ENCODE measurements at regions of chr9 and their contacts with region 1.

Region 1: GRCh38 chr9:127586537-127586936 is 25.5 kb upstream of the STXBP1 start:
- DNase-seq: peak; percentile 94
- H3K4me3 ChIP-seq: no peak overlapping the region
- H3K27ac ChIP-seq: peak overlapping the region in 3 of 4 donors; percentile 32 to 77 (median 76)
- H3K4me1 ChIP-seq: peaks cover 0 to 23% (median 19%) of the 10 kb centered on the region in 4 donors
- H3K27me3 ChIP-seq: no peaks in the 10 kb centered on the region
- CTCF ChIP-seq: peak; percentile 79 to 93 (median 88)
- EP300 ChIP-seq: no peak
- POLR2A ChIP-seq: no peak

Region 2: GRCh38 chr9:127503947-127504782 is 82.4 kb before region 1 on chr9:
- intact Hi-C with region 1: loop called (anchors 1 kb)
- DNase-seq: peak; percentile 94
- H3K4me3 ChIP-seq: no peak overlapping the region
- H3K27ac ChIP-seq: peak overlapping the region in 3 of 4 donors; percentile 74 to 75 (median 75)
- H3K4me1 ChIP-seq: peaks cover 0 to 23% (median 14%) of the 10 kb centered on the region in 4 donors
- H3K27me3 ChIP-seq: no peaks in the 10 kb centered on the region
- CTCF ChIP-seq: peak; percentile 86 to 96 (median 88)
- EP300 ChIP-seq: no peak
- POLR2A ChIP-seq: no peak

Region 3: GRCh38 chr9:127545196-127546124 is 41.1 kb before region 1 on chr9:
- intact Hi-C with region 1: no loop called
- DNase-seq: peak; percentile 88
- H3K4me3 ChIP-seq: no peak overlapping the region
- H3K27ac ChIP-seq: peak overlapping the region; percentile 69 to 92 (median 85)
- H3K4me1 ChIP-seq: peaks cover 0 to 86% (median 78%) of the 10 kb centered on the region in 4 donors
- H3K27me3 ChIP-seq: no peaks in the 10 kb centered on the region
- CTCF ChIP-seq: no peak
- EP300 ChIP-seq: no peak
- POLR2A ChIP-seq: no peak

Region 4: GRCh38 chr9:127715394-127716337 is 129.1 kb after region 1 on chr9 and contains the starts of genes PTRH1 and TTC16:
- intact Hi-C with region 1: loop called (anchors 5 kb)
- DNase-seq: peak; percentile 99
- H3K4me3 ChIP-seq: peak within 1 kb of the TSS; percentile 62 to 77 (median 72)
- H3K27ac ChIP-seq: peak within 1 kb of the TSS; percentile 81 to 90 (median 84)
- H3K4me1 ChIP-seq: peaks cover 0 to 23% (median 20%) of the 10 kb centered on the region in 4 donors
- H3K27me3 ChIP-seq: no peaks in the 10 kb centered on the region
- CTCF ChIP-seq: no peak
- EP300 ChIP-seq: no peak
- POLR2A ChIP-seq: peak; percentile 16 to 30
- total RNA-seq, gene PTRH1: 8.9 to 25.8 (median 19.4) TPM
- total RNA-seq, gene TTC16: not detected

Region 5: GRCh38 chr9:127770905-127771569 is 184.5 kb after region 1 on chr9:
- intact Hi-C with region 1: no loop called
- DNase-seq: peak; percentile 99
- H3K4me3 ChIP-seq: peak overlapping the region; percentile 27 to 57 (median 53)
- H3K27ac ChIP-seq: peak overlapping the region; percentile 56 to 69 (median 63)
- H3K4me1 ChIP-seq: peaks cover 0 to 12% (median 9%) of the 10 kb centered on the region in 4 donors
- H3K27me3 ChIP-seq: no peaks in the 10 kb centered on the region
- CTCF ChIP-seq: no peak
- EP300 ChIP-seq: no peak
- POLR2A ChIP-seq: no peak

Region 6: GRCh38 chr9:127785023-127785932 is 198.7 kb after region 1 on chr9:
- intact Hi-C with region 1: loop called (anchors 5 kb)
- DNase-seq: peak; percentile 95
- H3K4me3 ChIP-seq: peak overlapping the region; percentile 63 to 100 (median 96)
- H3K27ac ChIP-seq: peak overlapping the region; percentile 96 to 99 (median 96)
- H3K4me1 ChIP-seq: peaks cover 0 to 36% (median 29%) of the 10 kb centered on the region in 4 donors
- H3K27me3 ChIP-seq: no peaks in the 10 kb centered on the region
- CTCF ChIP-seq: peak; percentile 94 to 98 (median 97)
- EP300 ChIP-seq: no peak
- POLR2A ChIP-seq: no peak

Region 7: GRCh38 chr9:127916665-127917613 is 330.4 kb after region 1 on chr9 and contains the start of gene ST6GALNAC4:
- intact Hi-C with region 1: loop called (anchors 2 kb)
- DNase-seq: peak; percentile 97
- H3K4me3 ChIP-seq: peak within 1 kb of the TSS; percentile 51 to 68 (median 66)
- H3K27ac ChIP-seq: peak within 1 kb of the TSS; percentile 72 to 81 (median 78)
- H3K4me1 ChIP-seq: peaks cover 0 to 55% (median 50%) of the 10 kb centered on the region in 4 donors
- H3K27me3 ChIP-seq: no peaks in the 10 kb centered on the region
- CTCF ChIP-seq: no peak
- EP300 ChIP-seq: no peak
- POLR2A ChIP-seq: peak in 1 of 2 donors; percentile 39
- total RNA-seq, gene ST6GALNAC4: 22.8 to 27.7 (median 25.5) TPM